Caco-2 (cell line): ENCODE measurements at regions of chr16 and their contacts with region 1.

Region 1: GRCh38 chr16:74998481-74999218 is at the start of gene ZNRF1:
- DNase-seq: peak; percentile 92 to 94
- H3K4me3 ChIP-seq: peak within 1 kb of the TSS; percentile 88
- H3K4me3 Mint-ChIP-seq: peak within 1 kb of the TSS; percentile 95
- H3K27ac Mint-ChIP-seq: peak within 1 kb of the TSS; percentile 85
- H3K4me1 ChIP-seq: peaks cover 57% of the 10 kb centered on the region
- H3K4me1 Mint-ChIP-seq: peaks cover 55% of the 10 kb centered on the region
- H3K27me3 ChIP-seq: no peaks in the 10 kb centered on the region
- H3K27me3 Mint-ChIP-seq: no peaks in the 10 kb centered on the region
- CTCF ChIP-seq: peak; percentile 89 to 95
- total RNA-seq, gene ZNRF1: 68.6 and 73.8 TPM in 2 replicates

Region 2: GRCh38 chr16:74984535-74985296 is 13.9 kb before region 1 on chr16 and contains the start of gene WDR59:
- CTCF ChIA-PET with region 1: interaction called, 23 read pairs
- POLR2A ChIA-PET with region 1: interaction called, 18 read pairs
- intact Hi-C with region 1: no loop called
- DNase-seq: peak; percentile 100
- H3K4me3 ChIP-seq: peak within 1 kb of the TSS; percentile 84
- H3K4me3 Mint-ChIP-seq: peak within 1 kb of the TSS; percentile 80
- H3K27ac Mint-ChIP-seq: peak within 1 kb of the TSS; percentile 85
- H3K4me1 ChIP-seq: peaks cover 35% of the 10 kb centered on the region
- H3K4me1 Mint-ChIP-seq: peaks cover 8% of the 10 kb centered on the region
- H3K27me3 ChIP-seq: no peaks in the 10 kb centered on the region
- H3K27me3 Mint-ChIP-seq: no peaks in the 10 kb centered on the region
- CTCF ChIP-seq: no peak
- total RNA-seq, gene WDR59: 148 and 174 TPM in 2 replicates

Region 3: GRCh38 chr16:75029557-75030253 is 31.1 kb after region 1 on chr16:
- CTCF ChIA-PET with region 1: interaction called, 3 read pairs
- POLR2A ChIA-PET with region 1: no interaction called
- intact Hi-C with region 1: loop called (anchors 2 kb)
- DNase-seq: peak in 1 of 2 experiments; percentile 46
- H3K4me3 ChIP-seq: no peak overlapping the region
- H3K4me3 Mint-ChIP-seq: no peak overlapping the region
- H3K27ac Mint-ChIP-seq: peak overlapping the region; percentile 33
- H3K4me1 ChIP-seq: peaks cover 29% of the 10 kb centered on the region
- H3K4me1 Mint-ChIP-seq: peaks cover under 1% of the 10 kb centered on the region
- H3K27me3 ChIP-seq: no peaks in the 10 kb centered on the region
- H3K27me3 Mint-ChIP-seq: no peaks in the 10 kb centered on the region
- CTCF ChIP-seq: no peak

Region 4: GRCh38 chr16:75039941-75040340 is 41.3 kb after region 1 on chr16:
- CTCF ChIA-PET with region 1: no interaction called
- POLR2A ChIA-PET with region 1: no interaction called
- intact Hi-C with region 1: no loop called
- DNase-seq: no peak
- H3K4me3 ChIP-seq: no peak overlapping the region
- H3K4me3 Mint-ChIP-seq: no peak overlapping the region
- H3K27ac Mint-ChIP-seq: no peak overlapping the region
- H3K4me1 ChIP-seq: no peaks in the 10 kb centered on the region
- H3K4me1 Mint-ChIP-seq: peaks cover 2% of the 10 kb centered on the region
- H3K27me3 ChIP-seq: no peaks in the 10 kb centered on the region
- H3K27me3 Mint-ChIP-seq: no peaks in the 10 kb centered on the region
- CTCF ChIP-seq: no peak

Region 5: DNA sequence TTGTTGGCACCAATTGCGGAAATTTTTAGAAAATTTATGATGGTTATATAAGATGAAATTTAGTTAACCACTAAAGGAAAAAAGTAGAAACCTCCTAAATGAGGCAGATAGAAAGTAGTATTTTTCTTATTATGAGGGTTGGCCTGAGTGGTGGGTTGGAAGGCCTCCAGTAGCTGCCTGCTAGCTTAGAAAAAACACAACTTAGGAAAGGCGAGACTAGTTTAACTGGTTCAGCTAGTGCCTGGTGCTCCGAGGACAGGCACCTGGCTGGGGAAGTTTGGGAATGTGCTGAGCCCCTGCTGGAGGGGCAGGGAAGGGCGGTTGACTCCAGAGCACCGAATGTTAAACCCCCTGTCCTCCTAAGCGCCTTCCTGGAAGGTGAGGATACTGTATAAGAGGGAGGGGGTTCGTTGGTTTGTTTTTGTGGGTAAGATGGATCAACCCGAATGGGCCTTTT is 98.0 kb after region 1 on chr16:
- CTCF ChIA-PET with region 1: interaction called, 24 read pairs
- POLR2A ChIA-PET with region 1: interaction called, 4 read pairs
- intact Hi-C with region 1: loop called (anchors 1 kb)
- DNase-seq: peak; percentile 85 to 90
- H3K4me3 ChIP-seq: no peak overlapping the region
- H3K4me3 Mint-ChIP-seq: no peak overlapping the region
- H3K27ac Mint-ChIP-seq: peak overlapping the region; percentile 84
- H3K4me1 ChIP-seq: peaks cover 30% of the 10 kb centered on the region
- H3K4me1 Mint-ChIP-seq: peaks cover 24% of the 10 kb centered on the region
- H3K27me3 ChIP-seq: no peaks in the 10 kb centered on the region
- H3K27me3 Mint-ChIP-seq: no peaks in the 10 kb centered on the region
- CTCF ChIP-seq: peak; percentile 79 to 87